ENCODE measurements at regions of chr10 and their contacts with region 1.

Region 1: DNA sequence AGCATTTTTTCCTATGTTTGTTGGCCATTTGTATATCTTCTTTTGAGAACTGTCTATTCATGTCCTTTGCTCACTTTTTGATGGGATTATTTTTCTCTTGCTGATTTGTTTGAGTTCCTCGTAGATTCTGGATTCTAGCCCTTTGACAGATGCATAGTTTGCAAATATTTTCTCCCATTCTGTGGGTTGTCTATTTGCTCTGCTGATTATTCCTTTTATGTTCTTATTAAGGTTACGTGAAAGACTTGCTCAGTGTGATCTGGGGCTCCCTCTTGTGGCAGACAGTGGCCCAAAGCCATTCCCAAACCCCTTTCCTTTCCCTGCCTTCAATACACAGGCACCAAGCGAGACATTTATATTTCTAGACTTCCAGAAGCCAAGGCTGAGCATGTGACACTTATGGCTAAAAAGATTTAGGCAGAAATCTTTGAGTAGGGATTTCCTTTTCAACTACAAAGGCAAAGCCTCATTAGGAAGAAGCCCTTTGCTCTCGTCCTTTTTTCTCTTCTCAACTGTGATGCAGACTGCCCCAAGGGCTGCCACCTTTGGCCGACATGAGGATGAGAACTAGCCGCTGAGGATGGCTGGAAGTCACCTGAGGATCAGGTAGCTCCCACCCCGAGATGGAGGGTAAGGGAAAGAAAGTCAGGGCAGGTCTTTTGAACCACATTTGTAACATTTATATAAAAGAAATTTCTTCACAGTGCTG is 23.6 kb downstream of the ST8SIA6 start:
- DNase-seq: peak; percentile 73 to 85
- H3K4me3 ChIP-seq: no peak overlapping the region
- H3K27ac ChIP-seq: no peak overlapping the region
- H3K4me1 ChIP-seq: peaks cover 0 to 23% (median 11%) of the 10 kb centered on the region in 4 donors
- H3K27me3 ChIP-seq: peaks cover 0 to 2% of the 10 kb centered on the region in 2 donors
- CTCF ChIP-seq: peak; percentile 81 to 87

Region 2: GRCh38 chr10:17257466-17258321 is 173.1 kb before region 1 on chr10:
- intact Hi-C with region 1: loop called (anchors 10 kb)
- DNase-seq: peak in 1 of 2 donors; percentile 50
- H3K4me3 ChIP-seq: peak overlapping the region; percentile 22 to 27
- H3K27ac ChIP-seq: peak overlapping the region in 1 of 2 donors; percentile 35
- H3K4me1 ChIP-seq: peaks cover 0 to 7% (median 2%) of the 10 kb centered on the region in 4 donors
- H3K27me3 ChIP-seq: no peaks in the 10 kb centered on the region
- CTCF ChIP-seq: peak; percentile 82 to 85